ENCODE measurements at regions of chr1 and their contacts with region 1.

Region 1: DNA sequence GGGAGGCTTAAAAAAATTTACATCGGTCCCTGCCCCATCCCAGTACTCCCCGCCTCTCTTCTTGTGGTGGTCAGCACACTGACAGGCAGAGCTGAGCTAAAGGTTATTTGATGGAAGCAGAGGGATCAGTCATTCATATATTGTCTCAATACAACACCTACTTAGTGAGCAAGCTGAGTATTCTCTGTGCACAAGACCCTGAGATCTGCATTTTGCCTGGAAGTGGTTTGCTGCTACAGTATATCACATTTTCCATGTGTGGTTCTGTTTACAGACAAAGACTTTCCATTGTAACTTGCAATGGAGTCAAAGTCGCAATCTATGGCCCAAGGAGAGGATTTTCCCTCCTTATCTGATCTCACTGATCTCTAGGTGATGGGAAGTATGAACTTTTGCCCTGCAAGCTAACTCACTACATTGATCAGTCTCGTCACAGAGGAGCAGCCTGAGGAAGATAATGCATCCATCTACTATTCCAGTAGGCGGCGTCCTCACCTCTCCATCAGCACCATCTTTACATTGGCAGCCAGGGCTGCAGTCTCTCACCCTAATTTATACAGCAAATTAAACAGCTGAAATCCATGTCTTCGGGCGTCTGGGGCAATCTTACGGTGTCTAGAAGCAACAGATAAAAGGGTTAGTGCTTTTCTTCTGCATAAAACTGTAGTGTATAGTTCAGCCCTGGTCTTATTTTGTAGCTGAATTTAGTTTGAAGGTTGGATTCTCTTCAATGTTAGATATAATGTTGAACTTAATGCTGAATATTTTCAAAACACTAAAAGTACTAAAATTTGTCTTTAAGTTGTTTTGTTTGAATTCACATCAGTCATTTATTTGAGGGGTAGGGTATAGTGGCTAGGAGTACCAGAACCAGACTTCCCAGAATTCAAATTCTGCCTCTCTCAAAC is 3.2 kb upstream of the TRAF5 start:
- DNase-seq: peak in 1 of 2 experiments; percentile 59
- H3K4me3 ChIP-seq: no peak overlapping the region
- H3K27ac ChIP-seq: no peak overlapping the region
- H3K4me1 ChIP-seq: peaks cover 2 to 15% (median 7%) of the 10 kb centered on the region in 4 experiments; a peak in 6 of 7 replicates
- H3K27me3 ChIP-seq: peaks cover 0 to 7% (median 4%) of the 10 kb centered on the region in 4 experiments; a peak in 4 of 7 replicates
- CTCF ChIP-seq: peak; percentile 66 to 95 (median 91)
- EP300 ChIP-seq: no peak
- POLR2A ChIP-seq: no peak
- RAD21 ChIP-seq: peak; percentile 95

Region 2: DNA sequence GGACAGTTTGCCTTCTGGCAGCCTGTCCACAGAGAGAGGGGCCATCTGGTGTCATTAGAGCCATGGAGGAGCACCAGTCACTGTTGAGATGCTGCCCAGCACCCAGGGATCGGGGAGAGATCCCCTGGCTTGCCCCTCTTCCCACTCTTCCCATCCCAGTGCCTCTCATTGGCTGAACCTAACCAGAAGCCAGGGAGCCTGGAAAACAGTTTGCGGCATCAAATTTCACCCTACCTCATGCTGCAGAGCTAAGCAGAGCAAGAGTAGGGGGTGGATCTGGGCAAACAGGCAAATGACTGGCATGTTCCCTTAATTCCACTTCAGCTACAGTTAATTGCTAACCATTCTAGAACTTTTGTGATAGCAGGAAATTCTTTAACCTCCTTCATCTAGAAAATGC is 22.3 kb after region 1 on chr1:
- CTCF ChIA-PET with region 1: interaction called, 17 read pairs
- POLR2A ChIA-PET with region 1: no interaction called
- DNase-seq: no peak
- H3K4me3 ChIP-seq: no peak overlapping the region
- H3K27ac ChIP-seq: no peak overlapping the region
- H3K4me1 ChIP-seq: peaks cover 4 to 6% (median 5%) of the 10 kb centered on the region in 4 experiments; a peak in 6 of 7 replicates
- H3K27me3 ChIP-seq: no peaks in the 10 kb centered on the region
- CTCF ChIP-seq: no peak
- EP300 ChIP-seq: no peak
- POLR2A ChIP-seq: no peak
- RAD21 ChIP-seq: no peak

Region 3: DNA sequence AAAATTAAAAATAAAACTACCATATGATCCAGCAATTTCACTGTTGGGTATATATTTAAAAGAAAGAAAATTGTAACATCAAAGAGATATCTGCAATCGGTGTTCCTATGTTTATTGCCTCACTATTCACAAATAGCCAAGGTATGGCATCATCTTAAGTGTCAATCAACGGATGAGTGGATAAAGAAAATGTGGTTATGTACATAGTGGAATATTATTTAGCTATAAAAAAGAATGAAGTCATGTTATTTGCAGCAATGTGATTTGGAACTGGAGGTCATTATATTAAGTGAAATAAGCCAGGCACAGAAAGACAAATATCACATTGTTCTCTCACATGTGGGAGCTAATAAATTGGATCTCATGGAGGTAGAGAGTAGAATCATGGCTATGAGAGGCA is 92.3 kb after region 1 on chr1:
- CTCF ChIA-PET with region 1: interaction called, 16 read pairs
- POLR2A ChIA-PET with region 1: no interaction called
- DNase-seq: no peak
- H3K4me3 ChIP-seq: peak overlapping the region in 3 of 4 experiments; percentile 11 to 55 (median 32); a peak in 4 of 8 replicates
- H3K27ac ChIP-seq: no peak overlapping the region
- H3K4me1 ChIP-seq: peaks cover 0 to 3% (median 1%) of the 10 kb centered on the region in 4 experiments; a peak in 3 of 7 replicates
- H3K27me3 ChIP-seq: no peaks in the 10 kb centered on the region
- CTCF ChIP-seq: no peak
- EP300 ChIP-seq: no peak
- POLR2A ChIP-seq: no peak
- RAD21 ChIP-seq: no peak

Region 4: GRCh38 chr1:211476200-211476849 is 152.9 kb after region 1 on chr1:
- CTCF ChIA-PET with region 1: interaction called, 36 read pairs
- POLR2A ChIA-PET with region 1: interaction called, 7 read pairs
- DNase-seq: peak in 1 of 2 experiments; percentile 70
- H3K4me3 ChIP-seq: no peak overlapping the region
- H3K27ac ChIP-seq: no peak overlapping the region
- H3K4me1 ChIP-seq: no peaks in the 10 kb centered on the region; a peak in 1 of 7 replicates
- H3K27me3 ChIP-seq: no peaks in the 10 kb centered on the region
- CTCF ChIP-seq: peak; percentile 75 to 82 (median 75)
- EP300 ChIP-seq: no peak
- POLR2A ChIP-seq: no peak
- RAD21 ChIP-seq: peak; percentile 60 to 66

Region 5: GRCh38 chr1:211654838-211655787 is 331.7 kb after region 1 on chr1:
- CTCF ChIA-PET with region 1: interaction called, 14 read pairs
- POLR2A ChIA-PET with region 1: no interaction called
- DNase-seq: peak; percentile 67 to 96
- H3K4me3 ChIP-seq: no peak overlapping the region
- H3K27ac ChIP-seq: no peak overlapping the region
- H3K4me1 ChIP-seq: peaks cover 0 to 4% (median 0%) of the 10 kb centered on the region in 4 experiments; a peak in 3 of 7 replicates
- H3K27me3 ChIP-seq: no peaks in the 10 kb centered on the region
- CTCF ChIP-seq: peak; percentile 88 to 95 (median 90)
- EP300 ChIP-seq: no peak
- POLR2A ChIP-seq: no peak
- RAD21 ChIP-seq: peak; percentile 97 to 99